SK-N-SH (cell line): ENCODE measurements at regions of chr3 and their contacts with region 1.

Region 1: DNA sequence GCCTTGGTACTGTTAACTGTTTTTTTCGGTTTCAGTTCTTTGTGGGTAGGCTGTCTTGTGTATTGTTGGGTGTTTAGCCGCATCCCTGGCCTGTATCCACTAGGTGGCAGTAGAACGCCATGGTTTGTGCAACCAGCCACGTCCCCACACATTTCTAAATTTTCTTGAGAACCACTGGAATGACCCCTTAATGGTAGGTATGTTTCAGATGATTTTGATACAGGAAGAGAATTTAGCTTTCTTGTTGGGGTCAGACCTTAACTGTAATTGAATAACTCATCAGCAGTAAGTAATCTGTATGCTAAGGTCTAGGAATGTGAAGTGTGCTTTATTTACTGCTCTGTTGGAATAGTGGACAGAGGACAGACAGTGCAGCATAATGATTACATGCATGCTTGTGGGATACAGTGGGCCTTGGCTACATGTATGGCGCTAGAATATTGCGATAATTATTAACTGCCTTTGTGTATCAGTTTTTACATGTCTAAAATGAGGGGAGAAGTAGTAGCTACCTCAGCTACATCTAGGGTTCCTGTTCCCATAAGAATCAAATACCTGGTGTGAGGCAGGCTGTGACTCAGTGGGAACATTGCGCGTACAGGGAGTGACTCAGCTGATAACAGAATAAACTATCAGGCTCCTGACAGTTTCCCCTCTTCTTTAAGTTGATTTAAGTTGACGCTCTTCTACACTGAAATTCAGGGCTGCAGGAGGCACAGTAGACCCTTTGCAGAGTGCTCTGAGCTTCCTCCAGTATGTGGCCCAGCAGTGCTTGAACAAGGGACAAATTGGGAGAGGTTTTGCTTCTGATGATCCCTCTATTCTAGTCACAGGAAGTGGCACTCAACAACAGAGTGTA is 25.0 kb upstream of the GPR171 start:
- DNase-seq: peak; percentile 70
- H3K4me3 ChIP-seq: no peak overlapping the region; a peak in 1 of 4 replicates
- H3K27ac ChIP-seq: peak overlapping the region in 1 of 2 experiments; percentile 33; a peak in 1 of 4 replicates
- H3K4me1 ChIP-seq: peaks cover 0 to 3% of the 10 kb centered on the region in 2 experiments; a peak in 2 of 4 replicates
- H3K27me3 ChIP-seq: no peaks in the 10 kb centered on the region
- CTCF ChIP-seq: peak; percentile 96
- EP300 ChIP-seq: no peak
- RAD21 ChIP-seq: peak; percentile 93

Region 2: DNA sequence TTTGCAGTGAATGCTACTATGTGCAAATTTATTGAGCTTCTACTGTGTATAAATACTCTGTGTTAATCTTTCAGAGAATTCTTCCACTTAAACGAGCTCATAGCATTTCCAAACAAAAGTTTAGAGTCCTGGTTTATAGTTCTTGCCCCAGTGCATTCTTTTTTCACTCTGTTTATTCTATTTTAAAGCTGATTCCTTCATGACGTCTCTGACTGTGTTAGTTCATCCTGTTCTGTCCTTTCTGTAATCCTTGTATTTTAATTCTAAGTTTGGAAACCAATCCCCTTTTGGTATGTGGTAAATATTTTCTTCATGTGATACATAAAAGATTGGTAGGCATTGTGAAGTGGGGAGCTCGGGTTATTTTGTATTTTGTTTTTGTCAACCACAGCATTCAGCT is 31.6 kb after region 1 on chr3:
- CTCF ChIA-PET with region 1: interaction called, 11 read pairs
- POLR2A ChIA-PET with region 1: no interaction called
- DNase-seq: no peak
- H3K4me3 ChIP-seq: no peak overlapping the region
- H3K27ac ChIP-seq: no peak overlapping the region
- H3K4me1 ChIP-seq: peaks cover 0 to 6% of the 10 kb centered on the region in 2 experiments; a peak in 2 of 4 replicates
- H3K27me3 ChIP-seq: peaks cover 14% of the 10 kb centered on the region
- CTCF ChIP-seq: no peak
- EP300 ChIP-seq: no peak
- RAD21 ChIP-seq: no peak

Region 3: DNA sequence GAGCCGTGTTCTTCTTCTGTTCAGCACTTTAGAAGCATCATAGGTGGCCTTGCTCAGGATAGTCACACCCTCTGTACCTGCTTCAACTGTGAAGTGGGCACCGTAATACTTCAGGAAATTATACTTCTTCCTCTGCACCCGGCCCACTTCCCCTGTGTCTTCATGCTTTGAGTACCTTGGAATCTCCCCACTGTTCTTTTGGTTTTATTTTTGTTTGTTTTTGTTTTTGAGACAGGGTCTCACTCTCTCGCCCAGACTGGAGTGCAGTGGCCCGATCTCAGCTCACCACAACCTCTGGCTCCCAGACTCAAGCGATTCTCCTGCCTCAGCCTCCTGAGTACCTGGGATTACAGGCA is 48.6 kb after region 1 on chr3:
- CTCF ChIA-PET with region 1: interaction called, 63 read pairs
- POLR2A ChIA-PET with region 1: no interaction called
- DNase-seq: no peak
- H3K4me3 ChIP-seq: no peak overlapping the region
- H3K27ac ChIP-seq: no peak overlapping the region
- H3K4me1 ChIP-seq: no peaks in the 10 kb centered on the region
- H3K27me3 ChIP-seq: no peaks in the 10 kb centered on the region
- CTCF ChIP-seq: no peak
- EP300 ChIP-seq: no peak
- RAD21 ChIP-seq: no peak

Region 4: DNA sequence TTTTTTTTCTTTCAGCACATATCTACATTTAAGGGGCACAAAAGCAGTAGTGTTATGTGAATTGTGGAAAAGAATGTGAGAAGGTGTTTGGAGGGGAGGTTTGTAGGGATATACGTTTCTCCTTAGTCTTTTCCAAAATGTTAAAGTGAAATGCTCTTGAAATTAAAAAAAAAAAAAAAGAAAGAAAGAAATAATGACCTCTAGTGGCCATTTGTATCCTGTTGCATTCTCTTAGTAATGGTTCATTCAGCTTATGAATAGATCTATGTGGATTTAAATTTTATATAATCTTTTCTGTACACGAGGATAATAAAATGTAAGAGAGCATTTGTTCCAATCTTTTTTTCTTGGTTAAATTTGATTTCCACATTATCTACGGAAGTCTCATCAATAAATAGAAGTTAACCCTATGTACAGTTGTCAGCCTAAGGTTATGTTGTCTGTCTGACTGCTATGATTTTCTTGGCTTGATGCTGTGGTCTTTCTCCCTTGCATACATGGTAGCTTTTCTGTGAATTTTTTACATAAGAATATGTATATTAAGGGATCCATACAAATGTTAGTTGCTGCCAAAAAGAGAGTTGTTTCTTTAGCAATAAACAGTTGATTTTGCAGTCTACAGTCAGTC is 99.6 kb after region 1 on chr3:
- CTCF ChIA-PET with region 1: interaction called, 13 read pairs
- POLR2A ChIA-PET with region 1: no interaction called
- DNase-seq: peak; percentile 7
- H3K4me3 ChIP-seq: peak overlapping the region in 1 of 2 experiments; percentile 21; a peak in 1 of 4 replicates
- H3K27ac ChIP-seq: no peak overlapping the region
- H3K4me1 ChIP-seq: no peaks in the 10 kb centered on the region
- H3K27me3 ChIP-seq: peaks cover 6% of the 10 kb centered on the region; the same call in 1 of the 2 replicates
- CTCF ChIP-seq: peak; percentile 86
- EP300 ChIP-seq: no peak
- RAD21 ChIP-seq: peak; percentile 25

Region 5: DNA sequence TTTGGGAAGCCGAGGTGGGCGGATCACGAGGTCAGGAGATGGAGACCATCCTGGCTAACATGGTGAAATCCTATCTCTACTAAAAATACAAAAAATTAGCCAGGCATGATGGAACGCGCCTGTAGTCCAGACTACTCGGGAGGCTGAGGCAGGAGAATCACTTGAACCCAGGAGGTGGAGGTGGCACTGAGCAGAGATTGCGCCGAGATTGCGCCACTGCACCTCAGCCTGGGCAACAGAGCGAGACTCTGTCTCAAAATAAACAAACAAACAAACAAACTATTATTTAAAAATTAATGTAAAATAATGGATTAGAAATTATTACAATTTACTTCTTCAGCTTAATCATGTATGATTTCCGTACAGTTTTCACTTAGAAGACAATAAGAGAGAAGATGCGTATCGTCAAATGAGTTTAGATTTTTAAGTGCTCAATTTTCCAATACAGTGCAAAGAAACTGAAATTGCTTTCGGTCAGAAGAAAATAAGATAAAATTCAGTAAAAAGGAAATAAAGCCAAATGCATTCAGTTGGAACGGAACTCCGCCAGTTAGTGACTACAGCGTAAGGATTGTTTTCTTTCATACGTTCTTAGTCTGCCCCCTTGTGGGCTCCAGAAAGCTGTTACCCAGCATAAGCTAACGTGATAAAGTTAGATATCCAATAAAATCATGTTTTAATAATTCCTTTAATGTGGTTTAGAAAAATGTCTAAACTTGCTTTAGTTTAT is 610.7 kb after region 1 on chr3:
- CTCF ChIA-PET with region 1: interaction called, 25 read pairs
- POLR2A ChIA-PET with region 1: no interaction called
- DNase-seq: peak; percentile 31
- H3K4me3 ChIP-seq: peak overlapping the region in 1 of 2 experiments; percentile 45; a peak in 1 of 4 replicates
- H3K27ac ChIP-seq: peak overlapping the region in 1 of 2 experiments; percentile 84; a peak in 2 of 4 replicates
- H3K4me1 ChIP-seq: peaks cover 0 to 26% of the 10 kb centered on the region in 2 experiments
- H3K27me3 ChIP-seq: no peaks in the 10 kb centered on the region
- CTCF ChIP-seq: peak; percentile 90
- EP300 ChIP-seq: no peak
- RAD21 ChIP-seq: peak; percentile 89